A549 (cell line): ENCODE measurements at regions of chr17 and their contacts with region 1.

Region 1: DNA sequence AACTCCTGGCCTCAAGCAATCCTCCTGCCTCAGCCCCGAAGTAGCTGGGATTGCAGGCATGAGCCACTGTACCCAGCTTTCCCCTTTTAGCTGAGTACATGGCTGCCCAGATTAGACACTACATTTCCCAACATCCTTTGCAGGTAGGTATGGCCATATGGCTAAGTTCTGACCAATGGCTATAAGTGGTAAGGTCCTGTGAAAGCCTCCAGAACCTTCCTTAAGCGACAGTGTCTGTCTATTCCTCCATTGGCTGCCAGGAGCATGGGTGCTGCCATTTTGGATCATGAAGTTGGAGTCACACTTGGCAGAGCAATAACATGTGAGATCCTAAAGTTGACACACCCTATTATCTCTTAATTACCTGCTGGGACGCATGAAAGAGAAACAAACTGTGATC is 24.4 kb upstream of the CRHR1 start:
- DNase-seq: peak; percentile 26 to 63
- ATAC-seq: peak in 1 of 2 experiments; percentile 83; a peak in 3 of 6 replicates
- H3K4me3 ChIP-seq: no peak overlapping the region
- H3K27ac ChIP-seq: no peak overlapping the region
- H3K4me1 ChIP-seq: no peaks in the 10 kb centered on the region
- CTCF ChIP-seq: no peak
- EP300 ChIP-seq: no peak
- POLR2A ChIP-seq: no peak
- RAD21 ChIP-seq: no peak

Region 2: GRCh38 chr17:45584092-45585036 is 175.4 kb before region 1 on chr17:
- CTCF ChIA-PET with region 1: no interaction called
- POLR2A ChIA-PET with region 1: no interaction called
- DNase-seq: peak; percentile 80 to 84
- ATAC-seq: peak; percentile 60 to 69
- H3K4me3 ChIP-seq: peak overlapping the region; percentile 55
- H3K27ac ChIP-seq: peak overlapping the region; percentile 79 to 84
- H3K4me1 ChIP-seq: peaks cover 6% of the 10 kb centered on the region
- CTCF ChIP-seq: no peak
- EP300 ChIP-seq: no peak
- POLR2A ChIP-seq: peak; percentile 47
- RAD21 ChIP-seq: no peak; a peak in 2 of 5 replicates

Region 3: GRCh38 chr17:45692661-45693060 is 67.1 kb before region 1 on chr17:
- CTCF ChIA-PET with region 1: no interaction called
- POLR2A ChIA-PET with region 1: no interaction called
- DNase-seq: no peak
- ATAC-seq: no peak
- H3K4me3 ChIP-seq: no peak overlapping the region
- H3K27ac ChIP-seq: no peak overlapping the region
- H3K4me1 ChIP-seq: no peaks in the 10 kb centered on the region
- CTCF ChIP-seq: no peak
- EP300 ChIP-seq: no peak
- POLR2A ChIP-seq: no peak
- RAD21 ChIP-seq: no peak

Region 4: GRCh38 chr17:45734598-45734997 is 25.2 kb before region 1 on chr17:
- CTCF ChIA-PET with region 1: no interaction called
- POLR2A ChIA-PET with region 1: no interaction called
- DNase-seq: no peak
- ATAC-seq: peak in 1 of 2 experiments; percentile 31; a peak in 2 of 6 replicates
- H3K4me3 ChIP-seq: no peak overlapping the region
- H3K27ac ChIP-seq: no peak overlapping the region
- H3K4me1 ChIP-seq: no peaks in the 10 kb centered on the region
- CTCF ChIP-seq: no peak
- EP300 ChIP-seq: no peak
- POLR2A ChIP-seq: no peak
- RAD21 ChIP-seq: no peak

Region 5: GRCh38 chr17:45747911-45748310 is 11.8 kb before region 1 on chr17:
- CTCF ChIA-PET with region 1: interaction called, 19 read pairs
- POLR2A ChIA-PET with region 1: no interaction called
- DNase-seq: no peak
- ATAC-seq: no peak
- H3K4me3 ChIP-seq: no peak overlapping the region
- H3K27ac ChIP-seq: no peak overlapping the region
- H3K4me1 ChIP-seq: no peaks in the 10 kb centered on the region
- CTCF ChIP-seq: no peak
- EP300 ChIP-seq: no peak
- POLR2A ChIP-seq: no peak
- RAD21 ChIP-seq: no peak

Region 6: DNA sequence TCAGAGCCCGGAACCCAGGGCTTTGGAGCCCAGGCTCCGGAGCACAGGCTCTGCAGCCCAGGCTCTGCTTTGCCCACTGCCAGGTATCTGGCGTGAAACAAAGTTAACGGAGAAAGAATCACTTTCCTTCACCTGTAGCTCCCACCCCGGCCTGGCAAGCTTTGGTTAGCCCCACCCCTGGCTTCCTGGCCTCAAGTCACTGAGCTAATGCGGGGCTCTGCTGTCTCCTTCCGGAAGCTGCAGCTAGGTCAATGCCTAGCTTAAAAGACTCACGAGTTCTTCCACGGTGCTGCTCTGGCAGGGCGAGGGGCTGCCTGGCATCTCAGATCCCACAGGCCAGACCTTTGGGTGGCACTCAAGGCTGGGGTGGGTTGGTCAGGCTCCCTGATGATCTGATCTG is 63.8 kb after region 1 on chr17:
- CTCF ChIA-PET with region 1: no interaction called
- POLR2A ChIA-PET with region 1: no interaction called
- DNase-seq: no peak
- ATAC-seq: no peak
- H3K4me3 ChIP-seq: no peak overlapping the region
- H3K27ac ChIP-seq: no peak overlapping the region
- H3K4me1 ChIP-seq: no peaks in the 10 kb centered on the region
- CTCF ChIP-seq: no peak
- EP300 ChIP-seq: no peak
- POLR2A ChIP-seq: no peak
- RAD21 ChIP-seq: no peak